Spleen (tissue), 13 donors: ENCODE measurements at regions of chr9 and their contacts with region 1.

Region 1: GRCh38 chr9:34069831-34070230 is 21.1 kb upstream of the UBAP2 start:
- DNase-seq: no peak
- H3K4me3 ChIP-seq: no peak overlapping the region
- H3K27ac ChIP-seq: no peak overlapping the region
- H3K4me1 ChIP-seq: no peaks in the 10 kb centered on the region
- H3K27me3 ChIP-seq: peaks cover 0 to under 1% (median 0%) of the 10 kb centered on the region in 7 donors
- CTCF ChIP-seq: no peak
- POLR2A ChIP-seq: no peak

Region 2: DNA sequence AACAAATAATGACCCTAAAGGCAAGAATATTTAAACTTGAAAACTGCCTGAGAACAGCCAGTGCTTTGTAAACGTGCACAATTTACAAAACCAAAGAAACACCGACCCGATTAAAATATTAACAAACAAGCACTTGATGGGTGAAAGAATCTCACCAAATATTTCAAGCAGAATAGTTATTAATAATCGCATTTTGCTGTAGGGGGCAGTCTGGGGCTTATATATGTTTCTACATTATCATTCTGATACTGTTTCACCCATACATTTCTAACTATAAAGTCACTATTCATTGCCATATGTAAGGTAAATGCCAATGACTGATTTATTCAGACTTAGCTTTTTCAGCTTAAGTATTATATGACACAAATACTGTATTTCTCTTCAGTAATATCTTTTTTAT is 58.9 kb before region 1 on chr9:
- intact Hi-C with region 1: loop called (anchors 10 kb)
- DNase-seq: no peak
- H3K4me3 ChIP-seq: no peak overlapping the region
- H3K27ac ChIP-seq: no peak overlapping the region
- H3K4me1 ChIP-seq: no peaks in the 10 kb centered on the region
- H3K27me3 ChIP-seq: no peaks in the 10 kb centered on the region
- CTCF ChIP-seq: peak in 6 of 11 experiments; percentile 18 to 35 (median 29)
- POLR2A ChIP-seq: no peak